ENCODE measurements at regions of chr14 and their contacts with region 1.

Region 1: DNA sequence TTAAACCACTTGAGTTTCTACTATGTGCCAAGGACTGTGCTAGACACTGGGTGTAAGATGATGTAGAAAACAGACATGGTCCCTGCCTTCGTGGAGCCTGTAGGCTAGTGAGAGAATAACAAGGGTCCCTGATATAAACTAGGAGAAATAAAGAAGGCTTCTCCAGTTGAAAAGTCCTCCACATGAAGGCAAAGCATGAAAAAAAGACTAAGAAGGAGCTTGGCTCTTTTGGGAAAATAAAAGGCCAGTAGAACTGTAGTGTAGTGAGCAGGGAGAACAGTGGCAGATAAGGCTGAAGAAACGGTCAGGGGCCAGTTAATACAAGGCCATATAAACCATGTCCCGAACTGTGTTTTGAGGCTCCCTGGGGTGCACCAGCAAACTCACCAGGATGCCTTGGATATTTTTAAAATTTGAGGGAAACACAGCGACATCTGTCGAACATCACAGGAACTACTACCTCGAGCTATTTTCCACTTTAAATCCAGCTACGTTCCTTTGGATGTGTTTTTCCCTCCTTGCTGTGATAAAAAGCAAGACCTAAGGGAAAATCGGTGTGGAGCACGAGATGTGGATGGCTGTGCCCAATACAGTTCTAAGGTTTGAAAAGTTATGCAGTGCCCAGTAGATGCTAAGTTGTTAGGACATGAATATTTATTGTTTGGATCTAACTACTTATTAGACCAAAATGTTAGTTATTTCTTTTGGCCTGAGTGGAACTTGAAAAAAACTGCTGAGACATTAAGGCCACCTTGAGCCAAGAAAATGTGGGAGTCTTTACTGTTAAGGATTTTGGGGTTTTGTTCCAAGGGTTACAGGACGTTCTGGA is 8.5 kb upstream of the CFL2 start:
- DNase-seq: peak in 6 of 7 donors; percentile 19 to 75 (median 46)
- H3K4me3 ChIP-seq: no peak overlapping the region
- H3K27ac ChIP-seq: no peak overlapping the region
- H3K4me1 ChIP-seq: peaks cover 0 to 7% of the 10 kb centered on the region in 2 donors
- H3K27me3 ChIP-seq: no peaks in the 10 kb centered on the region
- CTCF ChIP-seq: peak; percentile 77 to 85 (median 82)
- POLR2A ChIP-seq: no peak

Region 2: GRCh38 chr14:34671716-34672115 is 51.2 kb before region 1 on chr14:
- intact Hi-C with region 1: loop called (anchors 5 kb)
- DNase-seq: no peak
- H3K4me3 ChIP-seq: no peak overlapping the region
- H3K27ac ChIP-seq: no peak overlapping the region
- H3K4me1 ChIP-seq: peaks cover 0 to 2% of the 10 kb centered on the region in 2 donors
- H3K27me3 ChIP-seq: no peaks in the 10 kb centered on the region
- CTCF ChIP-seq: no peak
- POLR2A ChIP-seq: no peak

Region 3: GRCh38 chr14:35390577-35391387 is 667.9 kb after region 1 on chr14:
- intact Hi-C with region 1: no loop called
- DNase-seq: peak in 1 of 7 donors; percentile 11
- H3K4me3 ChIP-seq: no peak overlapping the region
- H3K27ac ChIP-seq: no peak overlapping the region
- H3K4me1 ChIP-seq: peaks cover 5 to 8% of the 10 kb centered on the region in 2 donors
- H3K27me3 ChIP-seq: no peaks in the 10 kb centered on the region
- CTCF ChIP-seq: no peak
- POLR2A ChIP-seq: no peak